Tibial artery (tissue), 4 donors: ENCODE measurements at regions of chr3 and their contacts with region 1.

Region 1: DNA sequence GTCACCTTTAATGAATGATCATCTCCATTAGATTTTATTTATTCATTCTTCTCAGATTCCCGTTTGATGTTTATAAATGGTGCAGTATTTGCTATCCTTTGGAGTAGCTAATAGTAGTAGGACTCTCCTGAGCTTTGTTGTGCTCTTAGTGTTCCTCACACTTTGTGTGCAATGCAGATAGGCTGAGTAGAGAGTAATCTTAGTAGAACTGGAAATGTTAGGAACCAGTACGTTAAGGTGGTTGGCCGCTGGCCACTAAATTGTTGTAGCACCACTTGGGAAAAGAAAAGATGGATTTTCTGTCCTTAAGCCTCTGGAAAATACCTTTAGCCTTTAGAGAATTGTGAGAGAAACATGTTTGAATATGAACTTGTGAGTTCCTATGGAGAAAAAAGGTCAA is 19.9 kb upstream of the EBLN2 start:
- DNase-seq: no peak
- H3K4me3 ChIP-seq: no peak overlapping the region
- H3K27ac ChIP-seq: peak overlapping the region in 1 of 2 donors; percentile 38
- H3K4me1 ChIP-seq: peaks cover 0 to 63% (median 22%) of the 10 kb centered on the region in 4 donors
- H3K27me3 ChIP-seq: no peaks in the 10 kb centered on the region
- CTCF ChIP-seq: no peak

Region 2: GRCh38 chr3:72722930-72723726 is 318.4 kb before region 1 on chr3:
- intact Hi-C with region 1: no loop called
- DNase-seq: no peak
- H3K4me3 ChIP-seq: no peak overlapping the region
- H3K27ac ChIP-seq: no peak overlapping the region
- H3K4me1 ChIP-seq: peaks cover 0 to 20% (median 0%) of the 10 kb centered on the region in 4 donors
- H3K27me3 ChIP-seq: no peaks in the 10 kb centered on the region
- CTCF ChIP-seq: no peak

Region 3: GRCh38 chr3:72996473-72997333 is 44.8 kb before region 1 on chr3 and contains the start of gene PPP4R2:
- intact Hi-C with region 1: loop called (anchors 10 kb)
- DNase-seq: peak; percentile 78 to 92
- H3K4me3 ChIP-seq: peak within 1 kb of the TSS; percentile 89 to 92
- H3K27ac ChIP-seq: peak within 1 kb of the TSS; percentile 98
- H3K4me1 ChIP-seq: peaks cover 0 to 46% (median 25%) of the 10 kb centered on the region in 4 donors
- H3K27me3 ChIP-seq: no peaks in the 10 kb centered on the region
- CTCF ChIP-seq: no peak